H1 (cell line): ENCODE measurements at regions of chr20 and their contacts with region 1.

Region 1: DNA sequence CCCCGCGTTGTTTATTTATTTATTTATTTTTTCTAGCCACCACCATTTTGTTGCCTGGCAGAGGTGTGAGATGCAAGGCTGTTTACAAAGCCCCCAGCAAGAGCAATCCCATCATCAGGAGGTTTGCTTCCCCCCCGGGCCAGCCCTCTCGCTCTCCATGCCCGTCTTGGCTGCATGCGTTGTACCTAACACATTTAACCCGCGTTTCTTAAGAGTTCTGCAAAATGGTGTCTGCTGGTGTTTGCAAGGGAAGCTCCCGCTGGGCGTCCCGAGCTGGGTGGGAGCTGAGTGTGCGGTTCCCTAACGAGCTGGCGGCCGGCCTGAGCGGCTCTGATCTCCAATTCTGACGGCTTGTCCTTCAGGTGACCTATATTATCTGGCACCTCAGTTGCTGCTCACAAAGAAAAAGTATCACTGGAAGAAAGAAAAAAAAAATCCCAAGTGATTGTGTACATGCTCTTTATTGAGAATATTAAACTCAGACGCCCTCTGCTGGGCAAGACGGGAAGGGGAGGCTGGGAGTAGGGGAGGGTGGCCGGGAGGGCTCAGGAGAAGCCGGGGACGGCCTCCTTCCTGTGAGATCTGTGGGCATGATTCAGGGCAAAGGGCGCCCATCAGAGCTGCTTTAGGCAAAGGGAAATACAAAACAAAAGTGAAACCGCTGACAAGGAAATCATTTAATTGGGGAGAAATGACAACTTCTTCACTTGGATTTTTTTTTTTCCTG is 154.8 kb downstream of the BCAS1 start:
- DNase-seq: peak; percentile 59 to 97
- H3K4me3 ChIP-seq: peak overlapping the region; percentile 40 to 82 (median 68)
- H3K27ac ChIP-seq: peak overlapping the region; percentile 57; the same call in 1 of the 2 replicates
- H3K4me1 ChIP-seq: peaks cover 8 to 21% (median 17%) of the 10 kb centered on the region in 4 experiments; a peak in 6 of 7 replicates
- H3K27me3 ChIP-seq: no peaks in the 10 kb centered on the region
- CTCF ChIP-seq: peak; percentile 72 to 80 (median 72)
- EP300 ChIP-seq: no peak
- POLR2A ChIP-seq: no peak
- RAD21 ChIP-seq: peak; percentile 78 to 80

Region 2: DNA sequence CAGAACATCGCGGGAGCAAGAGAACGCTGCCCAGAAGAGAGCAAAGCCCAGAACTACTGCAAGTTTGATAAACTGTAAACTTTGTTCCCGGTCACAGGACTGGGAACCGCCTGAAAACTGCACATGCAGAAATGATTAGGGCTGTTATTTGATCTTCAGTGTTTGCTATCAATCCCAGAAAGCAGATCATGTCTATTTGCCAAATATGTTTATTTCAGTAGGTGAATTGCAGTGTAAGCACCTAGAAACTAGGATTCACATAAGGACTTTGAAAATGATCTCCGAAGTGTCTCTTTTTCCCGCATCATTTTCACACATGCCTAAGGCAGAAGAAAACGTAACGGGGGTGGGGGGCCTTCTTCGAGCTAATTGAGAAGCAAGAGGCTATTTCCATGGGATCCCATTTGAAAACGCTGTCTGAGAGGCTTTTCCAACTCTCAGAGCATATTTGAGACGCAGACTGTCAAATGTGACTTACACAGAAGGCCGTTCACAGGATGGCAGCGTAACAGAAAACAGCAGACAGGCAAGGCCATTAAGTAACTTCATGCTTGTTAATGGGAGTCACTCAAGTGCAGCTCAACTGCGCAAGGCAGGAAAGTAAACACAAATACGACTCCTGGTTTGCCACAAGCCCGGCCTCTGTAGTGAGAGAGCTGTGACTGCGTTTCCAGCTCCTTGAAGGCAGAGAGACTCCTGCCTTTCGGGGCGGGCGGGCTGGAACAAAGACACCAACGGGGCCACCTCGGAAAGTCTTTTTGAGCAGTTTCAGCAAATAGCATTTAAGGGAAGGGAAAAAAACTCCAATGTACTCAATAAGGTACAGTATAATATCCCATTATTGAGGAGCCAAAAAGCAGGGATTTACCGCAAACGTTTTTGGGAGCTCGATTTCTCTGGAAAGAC is 177.3 kb before region 1 on chr20:
- CTCF ChIA-PET with region 1: interaction called, 11 read pairs
- POLR2A ChIA-PET with region 1: interaction called, 4 read pairs
- DNase-seq: peak in 1 of 2 experiments; percentile 49
- H3K4me3 ChIP-seq: peak overlapping the region in 1 of 4 experiments; percentile 16; a peak in 1 of 8 replicates
- H3K27ac ChIP-seq: peak overlapping the region; percentile 55; the same call in 1 of the 2 replicates
- H3K4me1 ChIP-seq: peaks cover 23 to 40% (median 38%) of the 10 kb centered on the region in 4 experiments
- H3K27me3 ChIP-seq: no peaks in the 10 kb centered on the region
- CTCF ChIP-seq: no peak
- EP300 ChIP-seq: no peak
- POLR2A ChIP-seq: peak in 1 of 2 experiments; percentile 58; a peak in 2 of 3 replicates
- RAD21 ChIP-seq: no peak

Region 3: GRCh38 chr20:53875433-53875832 is 40.2 kb before region 1 on chr20:
- CTCF ChIA-PET with region 1: interaction called, 42 read pairs
- POLR2A ChIA-PET with region 1: interaction called, 4 read pairs
- DNase-seq: no peak
- H3K4me3 ChIP-seq: no peak overlapping the region
- H3K27ac ChIP-seq: no peak overlapping the region
- H3K4me1 ChIP-seq: peaks cover 0 to 12% (median 4%) of the 10 kb centered on the region in 4 experiments; a peak in 5 of 7 replicates
- H3K27me3 ChIP-seq: no peaks in the 10 kb centered on the region
- CTCF ChIP-seq: no peak
- EP300 ChIP-seq: no peak
- POLR2A ChIP-seq: no peak
- RAD21 ChIP-seq: no peak

Region 4: DNA sequence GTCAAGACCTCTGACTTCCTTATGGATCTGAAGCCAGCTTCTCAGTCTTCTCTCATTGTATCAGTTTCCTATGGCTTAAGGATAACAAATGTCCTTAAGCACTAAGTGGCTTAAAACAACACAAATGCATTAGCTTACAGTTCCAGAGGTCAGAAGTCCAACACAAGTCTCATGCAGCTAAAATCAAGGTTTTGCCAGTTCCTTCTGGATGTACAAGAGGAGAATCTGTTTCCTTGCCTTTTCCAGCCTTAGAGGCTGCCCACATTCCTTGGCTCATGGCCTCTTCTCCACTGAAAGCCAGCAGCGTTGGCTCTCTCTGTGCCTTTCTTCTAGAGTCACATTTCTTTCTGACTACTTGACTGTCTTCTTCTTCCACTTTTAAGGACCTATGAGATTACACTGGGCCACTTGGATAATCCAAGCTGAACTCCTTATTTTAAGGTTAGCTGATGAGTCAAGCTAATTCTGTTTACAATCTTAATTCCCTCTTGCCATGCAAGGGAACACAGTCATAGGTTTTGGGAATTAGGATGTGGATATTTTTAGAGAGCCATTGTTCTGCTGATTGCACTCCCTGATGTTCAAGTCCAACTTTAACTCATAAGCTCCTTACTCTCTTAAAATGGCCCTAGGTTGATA is 24.2 kb before region 1 on chr20:
- CTCF ChIA-PET with region 1: interaction called, 11 read pairs
- POLR2A ChIA-PET with region 1: no interaction called
- DNase-seq: no peak
- H3K4me3 ChIP-seq: no peak overlapping the region
- H3K27ac ChIP-seq: no peak overlapping the region
- H3K4me1 ChIP-seq: peaks cover 0 to 9% (median 3%) of the 10 kb centered on the region in 4 experiments; a peak in 4 of 7 replicates
- H3K27me3 ChIP-seq: no peaks in the 10 kb centered on the region; a peak in 1 of 7 replicates
- CTCF ChIP-seq: no peak
- EP300 ChIP-seq: no peak
- POLR2A ChIP-seq: no peak
- RAD21 ChIP-seq: no peak

Region 5: DNA sequence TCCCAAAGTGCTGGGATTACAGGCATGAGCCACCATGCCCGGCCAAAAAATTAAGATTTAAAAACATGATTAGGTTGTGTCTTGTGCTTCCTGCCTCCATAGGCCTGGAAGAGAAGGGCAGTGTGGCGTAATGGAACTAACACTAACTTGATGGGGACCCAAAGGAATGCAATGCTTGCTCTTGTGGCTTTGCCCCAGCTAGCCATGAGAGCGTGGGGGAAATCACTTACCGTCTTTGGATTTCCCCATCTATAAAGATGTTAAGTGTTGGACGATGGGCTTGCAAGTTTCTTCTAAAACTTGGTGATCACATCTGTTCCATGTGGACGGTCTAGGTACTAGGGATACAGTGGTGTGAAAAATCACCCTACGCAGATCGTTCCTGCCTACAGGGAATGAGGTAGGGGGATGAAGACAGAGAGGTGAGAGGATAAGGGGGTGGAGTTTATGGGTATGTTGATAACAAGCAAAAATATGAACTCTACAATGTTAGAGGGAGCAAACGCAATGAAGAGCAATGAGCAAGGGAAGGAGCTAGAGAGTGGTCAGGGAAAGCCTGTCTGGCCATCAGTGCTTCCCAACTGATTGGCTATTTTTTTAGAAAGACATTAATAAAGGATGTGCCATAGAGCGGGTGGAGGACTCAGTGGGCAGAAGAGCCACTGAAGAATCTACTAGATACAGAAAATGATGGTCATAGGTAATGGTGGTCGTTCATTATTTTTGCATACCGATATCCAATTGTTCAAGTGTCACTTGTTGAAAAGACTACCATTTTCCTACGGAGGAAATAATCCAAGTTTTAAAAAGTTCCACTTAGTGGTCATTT is 10.4 kb before region 1 on chr20:
- CTCF ChIA-PET with region 1: interaction called, 43 read pairs
- POLR2A ChIA-PET with region 1: interaction called, 20 read pairs
- DNase-seq: no peak
- H3K4me3 ChIP-seq: no peak overlapping the region
- H3K27ac ChIP-seq: no peak overlapping the region
- H3K4me1 ChIP-seq: peaks cover 0 to 11% (median 6%) of the 10 kb centered on the region in 4 experiments; a peak in 4 of 7 replicates
- H3K27me3 ChIP-seq: no peaks in the 10 kb centered on the region
- CTCF ChIP-seq: no peak
- EP300 ChIP-seq: no peak
- POLR2A ChIP-seq: no peak
- RAD21 ChIP-seq: no peak

Region 6: DNA sequence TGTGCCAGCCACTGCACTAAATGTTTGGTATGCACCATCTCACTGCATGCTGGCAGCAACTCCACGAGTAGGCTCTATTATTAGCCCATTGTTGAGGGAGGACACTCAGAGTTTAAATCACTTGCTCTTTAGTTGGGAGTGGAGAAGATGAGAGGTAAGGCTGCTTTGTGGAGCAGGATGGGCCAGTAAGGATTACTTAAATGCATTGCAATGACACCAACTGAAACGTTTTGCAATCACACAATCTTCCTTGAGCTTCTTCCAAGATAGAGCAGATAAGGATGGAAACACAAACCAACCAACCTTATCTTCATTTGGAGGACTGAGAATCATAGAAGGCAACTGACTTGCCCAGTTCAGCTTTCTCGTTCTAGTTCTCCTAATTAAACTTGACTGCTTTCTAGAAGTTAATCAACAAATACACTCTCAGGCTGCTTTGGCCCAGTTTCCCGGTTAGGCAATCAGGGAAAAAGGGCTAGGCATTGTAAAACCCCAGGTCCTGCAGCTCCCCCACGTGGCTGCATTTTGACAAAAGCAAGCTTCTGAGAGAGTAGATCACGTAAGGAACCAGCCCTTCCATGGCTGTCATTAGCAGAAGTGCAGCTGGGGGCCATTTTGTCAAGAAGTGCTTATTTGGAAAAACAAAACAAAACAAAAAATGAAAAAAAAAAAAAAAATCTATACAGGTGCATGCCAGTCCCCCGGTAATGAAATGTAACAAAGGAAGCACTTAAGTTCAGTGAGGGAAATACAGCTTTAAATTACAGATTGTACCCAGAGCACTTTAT is 24.2 kb after region 1 on chr20:
- CTCF ChIA-PET with region 1: interaction called, 102 read pairs
- POLR2A ChIA-PET with region 1: interaction called, 5 read pairs
- DNase-seq: peak; percentile 77 to 92
- H3K4me3 ChIP-seq: peak overlapping the region in 2 of 4 experiments; percentile 13 to 48; a peak in 2 of 8 replicates
- H3K27ac ChIP-seq: peak overlapping the region; percentile 35
- H3K4me1 ChIP-seq: peaks cover 6 to 25% (median 17%) of the 10 kb centered on the region in 4 experiments
- H3K27me3 ChIP-seq: no peaks in the 10 kb centered on the region
- CTCF ChIP-seq: peak; percentile 57 to 89 (median 82)
- EP300 ChIP-seq: no peak
- POLR2A ChIP-seq: no peak
- RAD21 ChIP-seq: peak; percentile 97 to 99